ENCODE measurements at regions of chr20 and their contacts with region 1.

Region 1: GRCh38 chr20:4358552-4358951 is 343.2 kb upstream of the RNF24 start:
- DNase-seq: no peak
- H3K4me3 ChIP-seq: no peak overlapping the region
- H3K27ac ChIP-seq: no peak overlapping the region
- H3K4me1 ChIP-seq: no peaks in the 10 kb centered on the region
- H3K27me3 ChIP-seq: no peaks in the 10 kb centered on the region
- CTCF ChIP-seq: no peak

Region 2: GRCh38 chr20:4320291-4320690 is 38.3 kb before region 1 on chr20:
- CTCF ChIA-PET with region 1: no interaction called
- dilution Hi-C with region 1: loop called (anchors 5 kb)
- in situ Hi-C with region 1: no loop called
- intact Hi-C with region 1: no loop called
- DNase-seq: no peak
- H3K4me3 ChIP-seq: no peak overlapping the region
- H3K27ac ChIP-seq: no peak overlapping the region
- H3K4me1 ChIP-seq: no peaks in the 10 kb centered on the region
- H3K27me3 ChIP-seq: no peaks in the 10 kb centered on the region
- CTCF ChIP-seq: no peak

Region 3: GRCh38 chr20:4406627-4407026 is 48.1 kb after region 1 on chr20:
- CTCF ChIA-PET with region 1: no interaction called
- dilution Hi-C with region 1: loop called (anchors 5 kb)
- in situ Hi-C with region 1: no loop called
- intact Hi-C with region 1: no loop called
- DNase-seq: peak; percentile 92
- H3K4me3 ChIP-seq: no peak overlapping the region
- H3K27ac ChIP-seq: no peak overlapping the region
- H3K4me1 ChIP-seq: peaks cover 21% of the 10 kb centered on the region
- H3K27me3 ChIP-seq: no peaks in the 10 kb centered on the region
- CTCF ChIP-seq: no peak

Region 4: DNA sequence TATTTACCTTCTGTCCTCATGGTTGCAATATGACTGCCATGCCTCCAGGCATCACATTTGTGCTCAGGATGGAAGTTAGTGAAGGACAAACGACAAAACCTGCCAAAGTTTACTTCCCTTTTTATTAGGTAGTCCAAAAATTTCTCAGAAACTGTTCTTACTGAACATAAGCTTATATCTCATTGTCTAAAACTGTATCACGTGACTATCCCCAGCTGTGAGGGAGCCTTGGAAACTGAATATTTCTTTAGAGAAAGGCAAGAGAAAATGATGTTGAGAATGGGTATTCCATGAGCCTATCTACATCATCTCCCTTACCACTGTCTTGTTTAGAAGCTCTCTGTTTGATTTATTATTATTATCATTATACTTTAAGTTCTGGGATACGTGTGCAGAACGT is 59.6 kb after region 1 on chr20:
- CTCF ChIA-PET with region 1: no interaction called
- dilution Hi-C with region 1: no loop called
- in situ Hi-C with region 1: no loop called
- intact Hi-C with region 1: no loop called
- DNase-seq: no peak
- H3K4me3 ChIP-seq: no peak overlapping the region
- H3K27ac ChIP-seq: no peak overlapping the region
- H3K4me1 ChIP-seq: peaks cover 11% of the 10 kb centered on the region
- H3K27me3 ChIP-seq: no peaks in the 10 kb centered on the region
- CTCF ChIP-seq: no peak